ENCODE measurements at regions of chr1 and their contacts with region 1.

Region 1: GRCh38 chr1:60894130-60894529 is 188.2 kb upstream of the NFIA start:
- DNase-seq: no peak
- CTCF ChIP-seq: no peak

Region 2: GRCh38 chr1:60813071-60813470 is 81.1 kb before region 1 on chr1:
- CTCF ChIA-PET with region 1: no interaction called
- POLR2A ChIA-PET with region 1: no interaction called
- DNase-seq: no peak
- CTCF ChIP-seq: no peak

Region 3: DNA sequence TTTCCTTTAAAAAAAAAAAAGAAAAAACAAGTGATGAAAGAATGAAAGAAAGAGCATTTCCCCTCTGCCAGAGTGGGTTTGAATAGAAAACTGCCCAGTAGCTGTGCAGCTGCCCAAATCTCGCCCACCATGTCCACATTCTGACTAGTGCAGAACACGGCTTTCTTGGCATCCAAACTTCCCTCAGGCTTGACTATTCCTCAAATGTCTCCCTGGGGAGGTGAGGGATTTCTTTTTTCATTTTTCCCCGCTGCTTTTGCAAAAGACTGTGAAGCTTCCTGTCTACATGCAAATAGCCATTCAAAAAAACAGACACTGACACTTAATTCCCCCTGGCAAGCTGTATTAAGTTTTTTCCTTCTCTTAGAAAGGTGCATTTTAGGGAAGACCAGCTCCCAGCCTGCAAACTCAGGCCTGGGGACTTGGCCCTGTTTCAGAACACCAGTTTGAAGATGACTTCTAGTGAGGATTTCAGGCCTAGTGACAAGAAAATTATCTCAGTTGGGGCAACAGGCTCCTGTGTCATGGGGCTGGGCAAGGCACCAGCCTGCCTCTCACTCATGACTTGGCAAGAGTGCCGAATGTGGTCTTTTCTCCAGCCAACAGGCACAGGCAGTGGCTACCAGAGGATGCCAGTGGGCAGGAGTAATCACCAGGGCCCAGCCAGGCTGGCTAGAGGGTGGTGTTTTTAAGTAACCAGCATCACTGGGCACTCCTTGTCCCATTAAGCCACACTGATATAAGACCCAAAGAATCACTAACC is 10.1 kb after region 1 on chr1:
- CTCF ChIA-PET with region 1: interaction called, 10 read pairs
- POLR2A ChIA-PET with region 1: no interaction called
- DNase-seq: no peak
- CTCF ChIP-seq: no peak

Region 4: DNA sequence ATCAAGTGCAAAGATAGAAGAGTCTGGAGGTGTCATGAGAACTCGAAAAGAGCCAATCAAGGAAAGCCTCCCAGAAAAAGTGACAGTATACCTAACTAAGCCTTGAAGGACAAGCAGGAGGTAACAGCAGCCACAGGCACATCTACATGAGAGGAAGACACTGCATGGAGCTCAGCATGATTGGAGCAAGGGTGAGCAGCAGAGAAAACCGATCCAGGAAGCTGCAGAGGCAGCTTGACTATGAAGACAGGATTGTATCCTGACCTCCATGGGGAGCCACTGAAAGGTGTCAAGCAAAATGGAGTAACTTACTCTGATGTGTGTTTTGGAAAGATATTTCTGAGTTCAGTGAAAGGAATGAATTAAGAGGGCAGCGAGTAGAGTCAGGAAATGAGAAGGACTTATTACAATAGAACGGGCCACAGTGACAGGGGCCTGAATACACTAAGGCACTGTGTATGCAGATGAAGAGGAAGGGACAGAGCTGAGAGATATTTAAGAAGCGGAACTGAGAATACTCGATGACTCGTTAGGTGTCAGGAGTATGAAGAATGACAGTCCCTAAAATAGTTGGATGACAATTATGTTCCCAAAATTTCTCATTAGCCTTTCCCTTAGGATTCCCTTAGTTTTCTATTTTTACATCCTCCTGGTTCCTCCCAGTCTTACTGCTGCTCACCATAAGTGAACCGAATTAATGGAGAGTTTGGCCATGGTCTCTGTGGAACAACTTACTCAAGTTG is 48.9 kb after region 1 on chr1:
- CTCF ChIA-PET with region 1: no interaction called
- POLR2A ChIA-PET with region 1: no interaction called
- DNase-seq: no peak
- CTCF ChIP-seq: no peak